Endothelial cell of umbilical vein (primary cell): ENCODE measurements at regions of chr10 and their contacts with region 1.

Region 1: DNA sequence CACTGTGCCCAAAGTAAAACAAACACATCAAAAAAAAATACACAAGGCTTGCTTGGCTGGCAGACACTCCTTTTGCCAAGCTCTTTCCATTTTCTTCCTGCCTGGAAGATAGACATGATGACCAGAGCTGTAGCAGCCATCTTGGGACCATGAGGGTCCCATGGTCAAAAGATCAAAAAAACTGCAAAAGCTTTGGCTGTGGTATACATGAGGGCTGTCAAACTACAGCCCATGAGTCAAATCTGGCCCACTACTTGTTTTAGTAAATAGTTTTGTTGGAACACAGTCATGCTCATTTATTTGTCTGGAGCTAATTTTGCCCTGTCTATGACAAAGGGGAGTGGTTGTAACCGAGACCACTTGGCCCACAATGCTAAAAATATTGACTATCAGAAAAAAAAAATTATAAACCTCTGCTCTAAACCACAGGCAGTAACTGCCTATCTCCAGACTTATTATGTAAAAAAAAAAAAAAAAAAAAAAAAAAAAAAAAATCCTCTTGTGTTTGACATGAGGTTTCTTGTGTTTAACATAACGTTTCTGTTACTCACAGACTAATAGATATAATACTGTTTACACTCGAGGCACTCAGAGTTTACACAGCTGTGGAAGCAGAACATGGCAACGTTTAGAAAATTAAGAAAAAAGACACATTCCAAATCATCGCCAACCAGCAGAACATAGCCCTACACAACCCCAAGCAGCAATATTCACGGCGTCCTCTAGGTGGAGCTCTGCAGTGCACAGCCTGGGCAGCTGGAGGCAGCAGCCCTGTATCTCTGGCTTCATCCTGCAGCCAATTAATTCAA is 36.9 kb downstream of the ASB13 start:
- DNase-seq: peak; percentile 65
- H3K4me3 ChIP-seq: no peak overlapping the region
- H3K27ac ChIP-seq: no peak overlapping the region
- H3K4me1 ChIP-seq: peaks cover 5% of the 10 kb centered on the region
- H3K27me3 ChIP-seq: peaks cover 0 to 8% of the 10 kb centered on the region in 2 experiments
- CTCF ChIP-seq: peak; percentile 85 to 86
- POLR2A ChIP-seq: no peak

Region 2: GRCh38 chr10:5614155-5614721 is 15.3 kb before region 1 on chr10:
- CTCF ChIA-PET with region 1: interaction called, 10 read pairs
- POLR2A ChIA-PET with region 1: no interaction called
- dilution Hi-C with region 1: no loop called
- intact Hi-C with region 1: no loop called
- DNase-seq: no peak
- H3K4me3 ChIP-seq: no peak overlapping the region
- H3K27ac ChIP-seq: no peak overlapping the region
- H3K4me1 ChIP-seq: no peaks in the 10 kb centered on the region
- H3K27me3 ChIP-seq: peaks cover 6 to 10% of the 10 kb centered on the region in 2 experiments
- CTCF ChIP-seq: no peak
- POLR2A ChIP-seq: no peak

Region 3: GRCh38 chr10:5645375-5645774 is 15.9 kb after region 1 on chr10:
- CTCF ChIA-PET with region 1: interaction called, 21 read pairs
- POLR2A ChIA-PET with region 1: no interaction called
- dilution Hi-C with region 1: no loop called
- intact Hi-C with region 1: no loop called
- DNase-seq: no peak
- H3K4me3 ChIP-seq: no peak overlapping the region
- H3K27ac ChIP-seq: no peak overlapping the region
- H3K4me1 ChIP-seq: no peaks in the 10 kb centered on the region
- H3K27me3 ChIP-seq: no peaks in the 10 kb centered on the region
- CTCF ChIP-seq: no peak
- POLR2A ChIP-seq: no peak

Region 4: GRCh38 chr10:5873515-5873995 is 244.0 kb after region 1 on chr10:
- CTCF ChIA-PET with region 1: interaction called, 6 read pairs
- POLR2A ChIA-PET with region 1: no interaction called
- dilution Hi-C with region 1: no loop called
- intact Hi-C with region 1: loop called (anchors 2 kb)
- DNase-seq: peak; percentile 85
- H3K4me3 ChIP-seq: no peak overlapping the region
- H3K27ac ChIP-seq: no peak overlapping the region
- H3K4me1 ChIP-seq: no peaks in the 10 kb centered on the region
- H3K27me3 ChIP-seq: no peaks in the 10 kb centered on the region
- CTCF ChIP-seq: peak; percentile 55 to 62
- POLR2A ChIP-seq: no peak

Region 5: GRCh38 chr10:5932345-5932744 is 302.8 kb after region 1 on chr10:
- CTCF ChIA-PET with region 1: no interaction called
- POLR2A ChIA-PET with region 1: no interaction called
- dilution Hi-C with region 1: no loop called
- intact Hi-C with region 1: no loop called
- DNase-seq: no peak
- H3K4me3 ChIP-seq: no peak overlapping the region
- H3K27ac ChIP-seq: no peak overlapping the region
- H3K4me1 ChIP-seq: no peaks in the 10 kb centered on the region
- H3K27me3 ChIP-seq: no peaks in the 10 kb centered on the region
- CTCF ChIP-seq: no peak
- POLR2A ChIP-seq: no peak